A673 (cell line): ENCODE measurements at regions of chr19 and their contacts with region 1.

Region 1: GRCh38 chr19:18557474-18558201 is at the start of gene KXD1:
- DNase-seq: peak; percentile 99
- H3K4me3 ChIP-seq: peak within 1 kb of the TSS; percentile 87
- H3K27ac ChIP-seq: peak within 1 kb of the TSS; percentile 85
- H3K4me1 ChIP-seq: peaks cover 4% of the 10 kb centered on the region
- H3K27me3 ChIP-seq: no peaks in the 10 kb centered on the region
- CTCF ChIP-seq: no peak
- total RNA-seq, gene KXD1: 111 and 114 TPM in 2 replicates

Region 2: DNA sequence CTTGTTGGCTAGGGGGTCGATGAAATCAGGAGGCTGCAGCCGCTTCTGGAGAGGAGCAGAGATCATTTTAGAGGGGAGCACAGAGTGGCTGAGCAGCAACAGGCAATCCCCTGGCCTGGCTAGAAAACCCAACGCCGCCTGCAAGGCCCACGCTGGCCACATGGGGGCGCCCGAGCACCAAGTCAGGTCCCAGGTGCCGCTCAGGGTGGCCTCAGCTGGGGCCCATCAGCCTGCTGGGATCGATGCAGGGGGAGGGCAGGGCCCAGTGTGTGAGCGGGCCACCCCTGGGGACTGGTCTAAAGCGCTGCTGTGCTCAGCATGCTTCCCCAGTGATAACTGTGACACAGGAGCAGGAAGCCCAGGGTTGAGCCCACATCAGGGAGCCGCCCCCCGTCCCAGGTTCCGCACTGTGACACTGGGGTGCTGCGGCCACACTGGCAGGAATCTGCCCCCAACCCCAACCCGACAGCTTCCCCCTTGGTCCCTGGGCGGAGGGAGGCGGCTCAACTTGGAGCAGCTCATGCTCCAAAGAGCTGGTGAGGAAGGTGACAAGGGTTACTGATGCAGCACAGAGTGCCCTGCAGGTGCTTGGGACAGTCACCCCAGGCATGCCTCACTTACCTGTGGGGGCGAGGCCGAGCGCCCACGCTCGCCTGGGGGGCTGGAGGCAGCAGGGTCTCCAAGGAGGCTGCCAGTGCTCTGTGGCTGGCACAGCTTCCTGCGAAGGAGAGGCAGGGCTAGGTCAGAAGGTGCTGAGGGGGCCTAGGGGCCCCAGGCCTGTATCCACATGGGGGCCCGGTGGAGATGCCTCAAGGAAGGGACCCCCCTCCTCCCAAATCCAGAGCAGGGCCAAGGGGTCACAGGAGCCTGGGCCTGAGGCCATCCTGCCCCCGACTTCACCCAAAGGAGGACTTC is 106.5 kb before region 1 on chr19:
- CTCF ChIA-PET with region 1: interaction called, 10 read pairs
- POLR2A ChIA-PET with region 1: no interaction called
- intact Hi-C with region 1: no loop called
- DNase-seq: peak; percentile 84
- H3K4me3 ChIP-seq: no peak overlapping the region
- H3K27ac ChIP-seq: peak overlapping the region; percentile 35
- H3K4me1 ChIP-seq: peaks cover 4% of the 10 kb centered on the region
- H3K27me3 ChIP-seq: no peaks in the 10 kb centered on the region
- CTCF ChIP-seq: peak; percentile 99

Region 3: DNA sequence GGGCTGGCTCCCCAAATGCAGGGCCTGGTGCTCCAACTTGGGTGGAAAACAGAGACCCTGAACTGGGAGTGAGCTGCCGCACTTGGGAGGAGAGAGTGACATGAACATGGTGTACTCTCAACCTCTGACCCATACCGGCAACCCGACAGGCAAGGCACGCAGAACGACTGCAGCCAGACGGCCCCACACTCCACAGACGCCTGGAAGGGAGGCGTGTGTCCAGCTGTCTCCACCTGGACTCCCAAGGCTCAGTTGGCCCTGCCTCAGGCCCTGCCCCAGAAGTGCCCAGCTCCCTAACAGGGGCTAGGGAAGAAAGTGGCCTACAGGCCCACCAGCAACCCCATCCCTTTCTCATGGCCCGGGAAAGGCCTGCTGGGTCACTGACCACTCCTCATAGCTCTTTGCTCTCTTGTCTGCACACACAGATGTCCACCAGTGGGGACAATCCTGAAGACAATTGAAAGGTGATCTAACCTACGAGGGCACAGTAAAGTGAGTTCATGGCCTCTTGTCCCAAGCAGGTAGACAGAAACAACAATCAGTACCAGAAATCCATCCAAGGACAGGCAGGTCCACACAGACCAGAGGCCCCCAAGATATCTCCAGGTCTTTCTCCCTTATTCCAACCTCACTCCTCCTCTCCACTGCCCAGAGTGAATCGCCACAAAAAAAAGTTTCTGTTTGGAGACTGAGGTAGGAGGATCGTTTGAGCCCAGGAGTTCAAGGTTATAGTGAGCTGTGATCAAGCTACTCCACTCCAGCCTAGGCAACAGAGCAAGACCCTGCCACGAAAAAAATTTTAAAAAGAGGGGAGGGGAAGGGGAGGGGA is 64.0 kb before region 1 on chr19:
- CTCF ChIA-PET with region 1: no interaction called
- POLR2A ChIA-PET with region 1: interaction called, 16 read pairs
- intact Hi-C with region 1: no loop called
- DNase-seq: no peak
- H3K4me3 ChIP-seq: no peak overlapping the region
- H3K27ac ChIP-seq: no peak overlapping the region
- H3K4me1 ChIP-seq: peaks cover 20% of the 10 kb centered on the region
- H3K27me3 ChIP-seq: no peaks in the 10 kb centered on the region
- CTCF ChIP-seq: no peak

Region 4: DNA sequence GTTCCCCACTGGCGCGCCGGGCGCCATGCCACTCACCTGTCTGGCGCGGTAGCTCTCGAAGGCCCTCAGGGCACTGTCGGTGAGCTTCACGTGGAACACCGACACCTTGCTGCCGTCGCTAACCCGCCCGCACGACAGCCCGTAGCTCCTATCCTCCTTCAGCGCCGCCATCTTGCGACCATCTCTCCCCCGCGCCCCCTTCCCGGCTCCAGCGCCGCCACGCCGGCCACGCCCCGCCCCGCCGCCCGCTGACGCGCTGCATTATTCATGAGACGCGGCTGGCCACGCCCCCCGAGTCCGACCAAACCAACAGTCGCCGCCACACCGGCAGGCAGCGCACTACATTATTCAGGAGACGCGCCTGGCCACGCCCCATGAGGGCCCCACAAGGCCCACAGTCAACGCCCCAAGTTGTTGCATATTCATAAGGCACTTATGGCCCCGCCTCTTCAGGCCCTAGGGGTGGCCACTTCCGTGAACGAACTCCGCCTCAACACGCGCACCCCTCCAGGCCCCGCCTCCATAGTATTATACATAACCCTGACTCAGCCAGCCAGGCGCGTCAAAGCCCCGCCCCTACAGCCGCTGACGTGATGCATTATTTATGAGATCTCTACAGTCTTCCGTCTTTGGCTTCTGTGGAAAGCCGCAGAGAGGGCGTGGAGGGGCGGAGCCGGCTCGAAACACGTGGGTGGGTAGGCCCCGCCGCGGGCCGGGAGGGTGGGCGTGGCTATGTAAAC is 35.6 kb before region 1 on chr19 and contains the start of gene ELL:
- CTCF ChIA-PET with region 1: interaction called, 3 read pairs
- POLR2A ChIA-PET with region 1: no interaction called
- intact Hi-C with region 1: loop called (anchors 1 kb)
- DNase-seq: peak; percentile 100
- H3K4me3 ChIP-seq: peak within 1 kb of the TSS; percentile 89
- H3K27ac ChIP-seq: peak within 1 kb of the TSS; percentile 93
- H3K4me1 ChIP-seq: peaks cover 4% of the 10 kb centered on the region
- H3K27me3 ChIP-seq: no peaks in the 10 kb centered on the region
- CTCF ChIP-seq: no peak
- total RNA-seq, gene ELL: 15.8 and 16.4 TPM in 2 replicates

Region 5: DNA sequence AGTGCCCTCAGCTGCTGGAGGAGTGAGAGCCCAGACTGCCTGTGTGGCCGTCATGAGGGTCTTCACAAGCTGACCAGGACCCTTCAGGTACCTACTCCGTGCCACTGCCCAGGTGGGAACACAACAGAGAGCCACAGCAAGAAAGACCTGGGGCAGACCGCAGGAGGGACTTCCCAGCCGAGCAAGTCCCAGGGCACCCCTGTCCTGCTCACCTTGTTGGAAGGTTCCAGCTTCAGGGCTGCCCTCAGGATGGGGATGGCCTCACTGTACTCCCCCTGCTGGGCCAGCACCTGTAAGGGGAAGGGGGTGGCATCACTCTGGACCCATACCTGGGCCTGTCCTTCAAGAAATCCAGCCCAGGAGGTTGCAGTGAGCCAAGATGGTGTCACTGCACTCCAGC is 24.6 kb before region 1 on chr19:
- CTCF ChIA-PET with region 1: no interaction called
- POLR2A ChIA-PET with region 1: interaction called, 10 read pairs
- intact Hi-C with region 1: no loop called
- DNase-seq: no peak
- H3K4me3 ChIP-seq: no peak overlapping the region
- H3K27ac ChIP-seq: no peak overlapping the region
- H3K4me1 ChIP-seq: no peaks in the 10 kb centered on the region
- H3K27me3 ChIP-seq: no peaks in the 10 kb centered on the region
- CTCF ChIP-seq: no peak

Region 6: GRCh38 chr19:18571564-18572300 is 14.1 kb after region 1 on chr19 and contains the start of gene UBA52:
- CTCF ChIA-PET with region 1: no interaction called
- POLR2A ChIA-PET with region 1: interaction called, 10 read pairs
- intact Hi-C with region 1: no loop called
- DNase-seq: peak; percentile 99
- H3K4me3 ChIP-seq: peak within 1 kb of the TSS; percentile 85
- H3K27ac ChIP-seq: peak within 1 kb of the TSS; percentile 94
- H3K4me1 ChIP-seq: peaks cover 13% of the 10 kb centered on the region
- H3K27me3 ChIP-seq: no peaks in the 10 kb centered on the region
- CTCF ChIP-seq: no peak
- total RNA-seq, gene UBA52: 1,270 and 1,348 TPM in 2 replicates

Region 7: DNA sequence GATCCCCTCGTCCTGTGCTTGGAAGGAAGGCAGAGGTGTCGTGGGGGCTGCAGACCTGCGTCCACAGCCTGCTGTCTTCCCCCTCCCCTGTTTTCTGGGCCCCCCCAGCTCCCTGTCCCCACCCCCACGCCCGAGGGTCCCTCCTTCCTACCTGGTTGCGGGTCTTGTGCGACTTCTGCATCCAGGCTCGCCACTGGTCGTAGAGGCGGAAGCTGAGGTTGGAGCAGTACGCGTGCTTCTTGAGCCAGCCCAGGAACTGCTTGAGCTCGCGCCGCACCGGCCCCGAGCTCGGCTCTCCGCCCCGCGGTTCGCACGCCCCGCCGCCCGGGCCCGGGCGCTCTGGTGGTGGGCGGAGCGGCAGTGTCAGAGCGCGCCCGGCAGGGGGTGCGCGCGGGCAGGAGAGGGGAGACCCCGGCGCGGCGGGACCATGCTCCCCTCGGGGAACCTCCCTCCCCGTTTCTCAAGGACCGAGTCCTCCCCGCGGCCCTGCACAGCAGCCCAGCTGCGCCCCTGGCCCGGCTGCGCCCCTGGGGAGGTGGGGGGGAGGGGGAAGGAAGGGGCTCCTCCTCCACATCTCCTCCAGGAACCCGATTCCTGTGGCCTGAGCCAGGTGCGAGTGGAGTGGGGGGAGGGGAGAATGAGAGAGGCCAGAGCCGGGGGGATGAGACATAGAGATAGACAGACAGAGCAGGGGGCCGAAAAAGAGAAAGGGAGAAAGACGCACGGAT is 36.6 kb after region 1 on chr19:
- CTCF ChIA-PET with region 1: no interaction called
- POLR2A ChIA-PET with region 1: no interaction called
- intact Hi-C with region 1: no loop called
- DNase-seq: peak; percentile 86
- H3K4me3 ChIP-seq: peak overlapping the region; percentile 25
- H3K27ac ChIP-seq: peak overlapping the region; percentile 60
- H3K4me1 ChIP-seq: peaks cover 68% of the 10 kb centered on the region
- H3K27me3 ChIP-seq: no peaks in the 10 kb centered on the region
- CTCF ChIP-seq: peak; percentile 62